OCI-LY7 (cell line): ENCODE measurements at regions of chr16 and their contacts with region 1.

Region 1: GRCh38 chr16:1105888-1106620 is 10.0 kb upstream of the C1QTNF8 start:
- DNase-seq: peak; percentile 44
- H3K4me3 ChIP-seq: no peak overlapping the region
- H3K27ac ChIP-seq: no peak overlapping the region
- H3K4me1 ChIP-seq: no peaks in the 10 kb centered on the region
- CTCF ChIP-seq: peak; percentile 50

Region 2: GRCh38 chr16:813204-813915 is 292.7 kb before region 1 on chr16:
- CTCF ChIA-PET with region 1: no interaction called
- POLR2A ChIA-PET with region 1: no interaction called
- intact Hi-C with region 1: loop called (anchors 2 kb)
- DNase-seq: peak; percentile 44
- H3K4me3 ChIP-seq: no peak overlapping the region
- H3K27ac ChIP-seq: no peak overlapping the region
- H3K4me1 ChIP-seq: no peaks in the 10 kb centered on the region
- CTCF ChIP-seq: peak; percentile 75

Region 3: GRCh38 chr16:1194665-1195392 is 88.8 kb after region 1 on chr16:
- CTCF ChIA-PET with region 1: no interaction called
- POLR2A ChIA-PET with region 1: no interaction called
- intact Hi-C with region 1: loop called (anchors 1 kb)
- DNase-seq: peak; percentile 12
- H3K4me3 ChIP-seq: no peak overlapping the region
- H3K27ac ChIP-seq: no peak overlapping the region
- H3K4me1 ChIP-seq: no peaks in the 10 kb centered on the region
- CTCF ChIP-seq: peak; percentile 76